ENCODE measurements at regions of chr17 and their contacts with region 1.

Region 1: DNA sequence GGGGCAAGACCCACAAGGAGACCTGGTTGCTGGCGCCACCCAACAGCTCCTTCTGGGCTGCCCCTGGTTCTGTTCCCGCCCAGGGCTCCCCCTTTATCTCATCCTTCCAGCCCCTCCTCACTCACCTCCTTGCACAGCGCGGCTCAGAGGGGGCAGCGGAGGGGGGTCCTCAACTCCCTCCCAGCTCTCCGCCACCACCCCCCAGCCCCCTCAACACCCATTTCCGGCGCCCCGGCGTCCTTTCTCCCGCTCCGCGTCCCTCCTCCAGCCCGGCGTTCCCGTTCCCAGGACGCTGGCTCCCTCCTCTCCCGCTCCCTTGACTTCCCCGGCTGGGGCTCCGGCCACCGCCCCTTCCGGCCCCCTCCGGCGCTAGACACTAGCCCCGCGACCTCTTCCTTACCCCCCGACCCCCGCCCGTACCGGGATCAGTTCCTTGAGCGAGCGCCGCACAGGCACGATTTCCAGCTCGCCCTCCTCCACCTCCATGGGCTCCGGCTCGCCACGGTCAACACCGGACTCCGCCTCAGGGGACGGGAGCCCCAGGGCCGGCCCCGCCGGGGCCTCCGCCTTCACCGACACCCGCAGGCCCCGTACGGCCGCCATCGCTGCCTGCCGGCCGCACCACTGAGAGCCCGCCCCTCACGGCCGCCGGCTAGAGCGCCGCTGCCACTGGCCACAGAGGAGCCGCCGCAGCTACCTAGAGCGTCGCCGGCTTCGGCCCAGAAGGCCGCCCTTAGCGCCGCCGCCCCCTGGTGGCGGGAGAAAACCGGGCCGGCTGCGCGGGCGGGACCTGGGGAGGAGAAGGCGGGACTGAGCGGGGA is at the start of gene NCBP3:
- DNase-seq: peak; percentile 88 to 92 (median 90)
- H3K4me3 ChIP-seq: peak within 1 kb of the TSS; percentile 77 to 96 (median 83)
- H3K27ac ChIP-seq: peak within 1 kb of the TSS in 4 of 5 donors; percentile 73 to 94 (median 79)
- H3K4me1 ChIP-seq: peaks cover 0 to 14% of the 10 kb centered on the region in 2 donors
- H3K27me3 ChIP-seq: no peaks in the 10 kb centered on the region
- CTCF ChIP-seq: peak; percentile 67 to 99 (median 94)
- POLR2A ChIP-seq: peak; percentile 92 to 97
- total RNA-seq, gene NCBP3: 11.0 to 30.4 (median 23.3) TPM

Region 2: DNA sequence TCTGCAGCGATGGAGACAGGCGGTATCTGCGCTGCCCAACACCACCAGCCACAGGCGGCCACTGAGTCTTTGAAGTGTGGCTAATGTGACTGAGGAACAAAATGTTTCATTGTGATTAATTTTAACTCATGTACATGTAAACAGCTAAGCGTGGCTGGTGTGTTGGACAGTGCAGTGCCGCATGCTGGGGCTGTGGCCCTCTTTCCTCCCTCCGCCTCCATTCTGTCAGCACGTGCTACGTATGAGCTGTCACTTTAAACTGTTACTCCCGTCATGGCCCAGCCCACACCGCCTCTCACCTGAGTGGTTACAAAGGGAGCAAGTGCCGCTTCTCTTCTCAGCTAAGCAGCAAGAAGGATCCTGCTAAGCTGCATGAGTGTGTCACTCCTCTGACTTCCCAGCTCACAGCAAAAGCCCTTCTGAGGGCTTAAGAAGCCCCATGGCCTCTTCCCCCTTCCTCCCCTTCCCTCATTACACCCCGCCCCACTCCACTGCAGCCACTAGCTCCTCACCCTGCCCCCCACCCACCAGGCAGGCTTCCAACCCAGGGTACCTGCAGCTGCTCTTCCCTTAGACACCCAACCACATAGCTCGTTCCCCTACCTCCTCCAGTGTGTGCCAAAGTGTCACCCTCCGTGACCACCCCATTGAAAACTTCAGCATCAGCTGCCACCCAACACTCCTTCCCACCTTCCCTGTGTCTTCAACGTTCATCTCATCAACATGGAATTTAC is 107.1 kb before region 1 on chr17:
- intact Hi-C with region 1: loop called (anchors 10 kb)
- DNase-seq: no peak
- H3K4me3 ChIP-seq: no peak overlapping the region
- H3K27ac ChIP-seq: no peak overlapping the region
- H3K4me1 ChIP-seq: no peaks in the 10 kb centered on the region
- H3K27me3 ChIP-seq: no peaks in the 10 kb centered on the region
- CTCF ChIP-seq: no peak
- POLR2A ChIP-seq: no peak

Region 3: GRCh38 chr17:3796110-3796821 is 49.6 kb before region 1 on chr17:
- intact Hi-C with region 1: no loop called
- DNase-seq: peak in 2 of 7 donors; percentile 12 to 19
- H3K4me3 ChIP-seq: no peak overlapping the region
- H3K27ac ChIP-seq: no peak overlapping the region
- H3K4me1 ChIP-seq: peaks cover 0 to 9% of the 10 kb centered on the region in 2 donors
- H3K27me3 ChIP-seq: no peaks in the 10 kb centered on the region
- CTCF ChIP-seq: no peak
- POLR2A ChIP-seq: no peak

Measured in adrenal gland (tissue), 19 donors.